K562 (cell line): ENCODE measurements at regions of chr4 and their contacts with region 1.

Region 1: DNA sequence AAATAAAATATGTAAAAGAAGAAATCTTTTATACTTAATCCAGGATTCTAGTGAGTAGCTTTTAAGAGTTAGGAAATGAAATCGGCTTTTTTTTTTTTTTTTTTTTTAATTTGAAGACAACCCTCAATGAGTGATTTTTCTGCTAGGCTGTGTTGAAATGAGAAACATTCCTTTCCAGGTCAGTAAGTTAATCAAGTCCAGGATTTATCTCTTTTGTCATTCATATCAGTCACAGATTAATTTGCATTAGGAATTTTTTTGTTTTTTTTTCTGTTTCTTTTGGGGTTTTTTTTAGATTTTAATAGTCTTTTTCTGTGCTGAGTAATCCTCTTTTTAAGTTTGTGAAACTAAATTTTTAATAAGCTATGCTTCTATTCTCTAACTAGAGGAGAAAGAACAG is 448.1 kb downstream of the ADGRL3 start:
- DNase-seq: no peak
- ATAC-seq: no peak
- H3K4me3 ChIP-seq: no peak overlapping the region
- H3K27ac ChIP-seq: no peak overlapping the region
- H3K4me1 ChIP-seq: no peaks in the 10 kb centered on the region
- H3K27me3 ChIP-seq: no peaks in the 10 kb centered on the region
- CTCF ChIP-seq: no peak
- EP300 ChIP-seq: no peak
- POLR2A ChIP-seq: no peak
- RAD21 ChIP-seq: no peak

Region 2: DNA sequence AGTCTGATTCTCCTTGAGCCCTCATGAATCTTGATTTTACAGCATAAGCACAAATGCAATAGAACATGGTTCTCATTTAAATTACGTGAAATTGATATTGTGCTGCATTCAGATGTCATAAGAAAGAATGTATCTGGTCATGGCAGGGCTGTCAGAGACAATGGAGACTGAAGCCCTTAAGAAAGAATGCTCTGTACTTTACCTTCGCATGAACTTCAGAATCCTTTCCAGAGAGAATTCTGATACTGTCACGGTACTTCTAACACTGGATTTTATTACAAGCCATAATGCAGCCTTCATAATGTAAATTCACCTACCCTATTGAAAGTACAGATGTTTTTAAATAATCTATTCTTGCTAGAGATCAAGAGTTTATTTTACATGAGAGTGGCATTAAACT is 1126.0 kb before region 1 on chr4:
- CTCF ChIA-PET with region 1: no interaction called
- POLR2A ChIA-PET with region 1: no interaction called
- in situ Hi-C with region 1: no loop called
- intact Hi-C with region 1: no loop called
- DNase-seq: no peak
- ATAC-seq: no peak
- H3K4me3 ChIP-seq: no peak overlapping the region
- H3K27ac ChIP-seq: no peak overlapping the region
- H3K4me1 ChIP-seq: no peaks in the 10 kb centered on the region
- H3K27me3 ChIP-seq: no peaks in the 10 kb centered on the region
- CTCF ChIP-seq: no peak
- EP300 ChIP-seq: no peak
- POLR2A ChIP-seq: no peak
- RAD21 ChIP-seq: no peak

Region 3: GRCh38 chr4:61628727-61629126 is 19.5 kb before region 1 on chr4:
- CTCF ChIA-PET with region 1: no interaction called
- POLR2A ChIA-PET with region 1: no interaction called
- in situ Hi-C with region 1: no loop called
- intact Hi-C with region 1: loop called (anchors 1 kb)
- DNase-seq: no peak
- ATAC-seq: no peak
- H3K4me3 ChIP-seq: no peak overlapping the region
- H3K27ac ChIP-seq: no peak overlapping the region
- H3K4me1 ChIP-seq: no peaks in the 10 kb centered on the region
- H3K27me3 ChIP-seq: no peaks in the 10 kb centered on the region
- CTCF ChIP-seq: no peak
- EP300 ChIP-seq: no peak
- POLR2A ChIP-seq: no peak
- RAD21 ChIP-seq: no peak